ENCODE measurements at regions of chr4 and their contacts with region 1.

Region 1: DNA sequence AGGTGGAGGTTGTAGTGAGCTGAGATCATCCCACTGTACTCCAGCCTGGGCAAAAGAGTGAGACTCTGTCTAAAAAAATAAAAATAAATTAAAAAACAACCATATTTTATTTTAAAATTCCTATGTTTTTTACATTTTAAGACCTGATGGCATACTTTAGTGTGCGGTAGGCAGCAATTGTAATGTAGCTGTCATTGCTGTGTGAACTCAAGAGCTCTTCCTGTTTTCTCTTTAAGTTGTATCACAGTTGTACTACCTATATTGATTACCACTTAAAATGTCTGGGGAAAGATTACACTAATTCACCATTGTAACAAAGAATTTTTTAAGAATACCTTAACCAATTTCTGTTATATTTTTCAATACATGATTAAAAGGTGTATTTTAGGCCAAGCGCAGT is 27.3 kb downstream of the ABCE1 start:
- DNase-seq: no peak
- ATAC-seq: no peak
- H3K4me3 ChIP-seq: peak overlapping the region; percentile 13
- H3K4me3 Mint-ChIP-seq: no peak overlapping the region
- H3K27ac ChIP-seq: peak overlapping the region in 1 of 2 donors; percentile 46
- H3K27ac Mint-ChIP-seq: peak overlapping the region; percentile 48
- H3K4me1 ChIP-seq: peaks cover 11% of the 10 kb centered on the region
- H3K4me1 Mint-ChIP-seq: peaks cover 16% of the 10 kb centered on the region
- H3K27me3 ChIP-seq: no peaks in the 10 kb centered on the region
- H3K27me3 Mint-ChIP-seq: no peaks in the 10 kb centered on the region
- CTCF ChIP-seq: no peak

Region 2: GRCh38 chr4:144374043-144374442 is 751.4 kb before region 1 on chr4:
- CTCF ChIA-PET with region 1: no interaction called
- POLR2A ChIA-PET with region 1: no interaction called
- intact Hi-C with region 1: no loop called
- DNase-seq: no peak
- ATAC-seq: no peak
- H3K4me3 ChIP-seq: no peak overlapping the region
- H3K4me3 Mint-ChIP-seq: no peak overlapping the region
- H3K27ac ChIP-seq: no peak overlapping the region
- H3K27ac Mint-ChIP-seq: no peak overlapping the region
- H3K4me1 ChIP-seq: no peaks in the 10 kb centered on the region
- H3K4me1 Mint-ChIP-seq: no peaks in the 10 kb centered on the region
- H3K27me3 ChIP-seq: no peaks in the 10 kb centered on the region
- H3K27me3 Mint-ChIP-seq: no peaks in the 10 kb centered on the region
- CTCF ChIP-seq: no peak

Region 3: DNA sequence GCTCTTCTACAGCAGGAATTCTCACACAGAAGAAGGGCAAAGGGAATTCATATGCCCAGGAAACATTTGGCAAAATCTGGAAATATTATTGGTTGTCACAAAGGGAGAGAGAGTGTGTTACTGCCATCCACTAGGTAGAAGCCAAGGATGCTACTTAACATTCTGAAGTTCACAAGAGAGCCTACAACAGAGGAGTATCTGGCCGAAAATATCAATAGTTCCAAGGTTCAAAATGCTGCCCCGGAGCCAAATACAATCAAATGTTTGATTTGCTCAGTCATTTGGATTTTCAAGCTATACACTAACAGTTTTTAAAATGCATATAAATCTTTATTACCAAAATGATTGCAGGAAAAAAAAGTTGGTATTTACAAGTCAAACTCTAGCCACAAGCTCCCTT is 36.2 kb after region 1 on chr4:
- CTCF ChIA-PET with region 1: no interaction called
- POLR2A ChIA-PET with region 1: interaction called, 4 read pairs
- intact Hi-C with region 1: loop called in 1 of 2 experiments (anchors 5 kb)
- DNase-seq: no peak
- ATAC-seq: no peak
- H3K4me3 ChIP-seq: no peak overlapping the region
- H3K4me3 Mint-ChIP-seq: no peak overlapping the region
- H3K27ac ChIP-seq: no peak overlapping the region
- H3K27ac Mint-ChIP-seq: no peak overlapping the region
- H3K4me1 ChIP-seq: no peaks in the 10 kb centered on the region
- H3K4me1 Mint-ChIP-seq: no peaks in the 10 kb centered on the region
- H3K27me3 ChIP-seq: no peaks in the 10 kb centered on the region
- H3K27me3 Mint-ChIP-seq: no peaks in the 10 kb centered on the region
- CTCF ChIP-seq: no peak

Region 4: GRCh38 chr4:145203410-145203809 is 78.0 kb after region 1 on chr4:
- CTCF ChIA-PET with region 1: no interaction called
- POLR2A ChIA-PET with region 1: no interaction called
- intact Hi-C with region 1: no loop called
- DNase-seq: no peak
- ATAC-seq: no peak
- H3K4me3 ChIP-seq: no peak overlapping the region
- H3K4me3 Mint-ChIP-seq: no peak overlapping the region
- H3K27ac ChIP-seq: no peak overlapping the region
- H3K27ac Mint-ChIP-seq: no peak overlapping the region
- H3K4me1 ChIP-seq: no peaks in the 10 kb centered on the region
- H3K4me1 Mint-ChIP-seq: no peaks in the 10 kb centered on the region
- H3K27me3 ChIP-seq: no peaks in the 10 kb centered on the region
- H3K27me3 Mint-ChIP-seq: no peaks in the 10 kb centered on the region
- CTCF ChIP-seq: no peak